GM10248 (cell line): ENCODE measurements at regions of chr20 and their contacts with region 1.

Region 1: GRCh38 chr20:46349035-46349741 is 40.9 kb upstream of the CDH22 start:
- DNase-seq: peak; percentile 75
- CTCF ChIP-seq: peak; percentile 67

Region 2: DNA sequence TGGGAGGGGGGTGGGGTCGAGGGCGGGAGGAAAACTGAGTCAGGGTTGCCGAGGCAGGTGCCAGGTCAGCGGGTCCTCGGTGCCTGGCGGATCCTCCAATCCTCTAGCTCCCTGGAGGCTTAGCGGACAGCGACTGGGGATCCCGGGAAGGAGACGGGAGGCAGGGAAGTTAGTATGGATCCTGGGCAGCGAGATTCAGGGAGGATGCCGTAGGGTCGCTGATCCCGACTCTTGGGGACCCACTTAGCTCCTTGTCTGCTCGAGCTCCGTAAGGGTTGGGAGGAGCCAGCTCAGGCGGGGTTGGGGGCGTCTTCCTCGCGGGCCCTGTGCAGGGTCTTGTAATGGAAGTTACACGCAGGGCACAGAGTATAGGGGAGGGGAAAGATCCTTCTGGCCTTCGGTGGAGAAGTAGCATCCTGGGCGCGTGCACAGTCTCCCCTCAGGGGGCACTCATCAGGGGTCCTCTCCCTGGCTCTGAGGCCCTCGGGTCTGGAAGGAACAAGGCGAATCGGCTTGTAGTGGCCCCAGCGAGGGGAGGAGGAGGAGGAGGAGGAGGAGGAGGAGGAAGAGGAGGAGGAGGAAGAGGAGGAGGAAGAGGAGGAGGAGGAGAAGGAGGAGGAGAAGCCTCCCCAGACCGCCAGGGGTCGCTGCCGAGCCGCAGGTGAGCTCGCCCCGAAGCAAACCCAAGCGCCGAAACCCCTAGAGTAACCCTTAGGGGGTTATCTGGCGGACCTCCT is 326.6 kb before region 1 on chr20:
- CTCF ChIA-PET with region 1: interaction called, 14 read pairs
- POLR2A ChIA-PET with region 1: no interaction called
- DNase-seq: peak; percentile 82
- CTCF ChIP-seq: peak; percentile 72

Region 3: GRCh38 chr20:46307139-46307998 is 41.8 kb before region 1 on chr20:
- CTCF ChIA-PET with region 1: interaction called, 80 read pairs
- POLR2A ChIA-PET with region 1: no interaction called
- DNase-seq: peak; percentile 94
- CTCF ChIP-seq: peak; percentile 95

Region 4: GRCh38 chr20:46324379-46324778 is 24.8 kb before region 1 on chr20:
- CTCF ChIA-PET with region 1: interaction called, 11 read pairs
- POLR2A ChIA-PET with region 1: no interaction called
- DNase-seq: no peak
- CTCF ChIP-seq: no peak

Region 5: DNA sequence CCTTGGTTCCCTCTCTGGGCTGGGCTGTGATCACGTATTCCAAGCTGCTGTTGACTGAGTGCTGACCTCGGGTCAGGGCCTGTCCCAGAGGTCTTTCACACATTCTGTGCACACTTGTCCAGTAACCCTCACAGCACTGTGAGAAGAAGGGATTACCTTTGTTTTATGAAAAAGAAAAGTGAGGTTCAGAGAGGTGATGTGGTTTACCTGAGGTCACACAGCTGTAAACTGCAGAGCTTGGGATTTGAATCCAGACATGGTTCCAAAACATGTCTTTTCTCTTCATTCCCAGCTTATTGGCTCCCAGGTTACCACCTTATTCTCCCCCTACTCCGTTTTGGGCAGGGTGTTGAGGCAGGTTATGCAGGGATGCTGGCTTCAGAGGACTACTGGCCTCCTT is 12.5 kb before region 1 on chr20:
- CTCF ChIA-PET with region 1: interaction called, 13 read pairs
- POLR2A ChIA-PET with region 1: interaction called, 9 read pairs
- DNase-seq: no peak
- CTCF ChIP-seq: no peak

Region 6: DNA sequence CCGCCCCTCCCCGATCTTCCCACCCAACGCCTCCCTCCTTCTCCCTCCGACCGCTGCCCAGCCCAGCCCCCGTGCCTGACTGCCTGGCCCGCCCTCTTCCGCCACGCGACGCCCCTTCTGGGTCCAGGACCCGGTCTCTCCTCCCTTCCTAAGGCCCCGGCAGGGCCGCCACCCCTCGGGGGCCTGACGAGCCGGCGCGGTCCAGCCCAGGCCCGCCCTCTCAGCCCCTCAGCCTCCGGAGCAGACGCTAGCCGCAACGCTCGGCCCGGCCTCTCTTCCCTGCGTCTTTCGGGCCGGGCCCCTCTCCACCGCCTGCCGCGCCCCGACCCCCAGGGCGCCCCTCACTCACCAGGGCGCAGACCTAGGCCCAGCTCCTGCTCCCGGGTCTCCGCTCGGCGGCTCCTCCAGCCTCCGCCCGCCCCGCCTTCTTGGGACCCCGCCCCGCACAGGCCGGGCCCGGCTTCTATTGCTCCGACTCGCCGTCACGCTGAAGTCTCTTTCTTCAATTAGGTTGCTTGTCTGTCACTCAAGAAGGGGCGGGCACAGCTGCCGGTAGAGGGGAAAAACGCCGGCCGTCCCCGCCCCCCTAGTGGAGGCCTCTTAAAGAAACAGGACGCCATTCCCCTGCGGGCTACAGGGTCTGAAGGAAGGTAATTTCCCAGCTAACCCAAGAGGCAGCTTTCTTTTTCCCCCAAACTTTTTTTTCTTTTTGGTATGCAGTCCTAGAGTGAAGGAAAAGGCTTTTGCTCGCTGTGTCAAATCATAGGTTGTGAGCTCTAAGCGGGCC is 57.2 kb after region 1 on chr20 and contains the start of gene ELMO2:
- CTCF ChIA-PET with region 1: interaction called, 13 read pairs
- POLR2A ChIA-PET with region 1: no interaction called
- DNase-seq: peak; percentile 94
- CTCF ChIP-seq: no peak

Region 7: GRCh38 chr20:46994341-46994740 is 645.2 kb after region 1 on chr20:
- CTCF ChIA-PET with region 1: no interaction called
- POLR2A ChIA-PET with region 1: no interaction called
- DNase-seq: peak; percentile 63
- CTCF ChIP-seq: no peak